Ascending aorta (tissue), 2 donors: ENCODE measurements at regions of chr2 and their contacts with region 1.

Region 1: GRCh38 chr2:99559075-99559662 is 69.4 kb upstream of the REV1 start:
- DNase-seq: peak; percentile 21 to 92
- H3K4me3 ChIP-seq: no peak overlapping the region
- H3K27ac ChIP-seq: no peak overlapping the region
- H3K4me1 ChIP-seq: no peaks in the 10 kb centered on the region
- H3K27me3 ChIP-seq: no peaks in the 10 kb centered on the region
- CTCF ChIP-seq: peak; percentile 89 to 99 (median 98)

Region 2: GRCh38 chr2:100242891-100243619 is 683.9 kb after region 1 on chr2:
- intact Hi-C with region 1: loop called (anchors 1 kb)
- DNase-seq: peak in 1 of 2 donors; percentile 78
- H3K4me3 ChIP-seq: no peak overlapping the region
- H3K27ac ChIP-seq: no peak overlapping the region
- H3K4me1 ChIP-seq: no peaks in the 10 kb centered on the region
- H3K27me3 ChIP-seq: no peaks in the 10 kb centered on the region
- CTCF ChIP-seq: peak; percentile 54 to 74 (median 63)

Region 3: DNA sequence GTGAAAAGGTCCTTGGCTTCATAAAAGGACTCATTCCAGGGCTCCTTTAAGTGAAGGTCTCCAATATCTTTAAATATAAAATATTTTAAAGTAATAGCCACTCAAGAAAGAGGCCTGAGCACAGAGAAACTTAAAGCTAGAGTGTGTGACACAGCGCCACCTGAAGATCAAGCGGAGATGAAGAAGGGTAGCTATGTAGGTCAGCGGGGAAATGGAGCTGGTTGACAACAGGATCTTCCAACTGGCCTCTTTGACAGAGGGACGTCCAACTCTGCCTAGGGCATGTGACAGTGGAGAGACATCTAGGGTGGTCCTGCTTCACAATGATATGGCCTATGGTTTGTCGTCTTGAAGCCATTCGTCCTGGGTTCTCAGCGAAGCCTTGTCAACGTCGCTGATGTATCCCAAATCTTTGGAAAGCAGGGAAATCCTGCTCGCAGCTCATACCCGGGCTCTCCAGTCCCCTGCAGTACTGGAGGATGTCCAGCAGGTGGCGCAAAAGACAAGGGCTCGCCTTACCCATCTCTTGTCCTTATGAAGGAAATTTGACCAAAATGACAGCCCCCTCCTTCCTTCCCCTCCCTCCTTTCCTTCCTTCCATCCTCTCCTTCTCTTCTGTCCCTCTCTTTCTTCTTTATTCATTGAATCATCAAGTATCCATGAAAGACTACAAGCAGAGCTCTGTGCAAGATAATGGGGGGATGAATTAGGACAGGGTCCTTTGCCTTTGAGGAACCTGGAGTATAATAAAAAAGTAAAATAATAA is 703.6 kb after region 1 on chr2:
- intact Hi-C with region 1: loop called (anchors 1 kb)
- DNase-seq: peak in 1 of 2 donors; percentile 80
- H3K4me3 ChIP-seq: no peak overlapping the region
- H3K27ac ChIP-seq: no peak overlapping the region
- H3K4me1 ChIP-seq: peaks cover 5 to 6% of the 10 kb centered on the region in 2 donors
- H3K27me3 ChIP-seq: no peaks in the 10 kb centered on the region
- CTCF ChIP-seq: peak; percentile 81 to 97 (median 93)